Activated CD4-positive, alpha-beta T cell treated with anti-CD3 and anti-CD28 coated beads, Interleukin-2, amount 10 ng/mL, durations not matched to agents 7 days and 5 days (primary cell): ENCODE measurements at regions of chr5 and their contacts with region 1.

Region 1: GRCh38 chr5:52757991-52758390 is 29.7 kb upstream of the ITGA1 start:
- DNase-seq: no peak
- H3K4me3 Mint-ChIP-seq: no peak overlapping the region
- H3K27ac Mint-ChIP-seq: no peak overlapping the region
- H3K4me1 Mint-ChIP-seq: no peaks in the 10 kb centered on the region
- H3K27me3 Mint-ChIP-seq: peaks cover 14% of the 10 kb centered on the region

Region 2: DNA sequence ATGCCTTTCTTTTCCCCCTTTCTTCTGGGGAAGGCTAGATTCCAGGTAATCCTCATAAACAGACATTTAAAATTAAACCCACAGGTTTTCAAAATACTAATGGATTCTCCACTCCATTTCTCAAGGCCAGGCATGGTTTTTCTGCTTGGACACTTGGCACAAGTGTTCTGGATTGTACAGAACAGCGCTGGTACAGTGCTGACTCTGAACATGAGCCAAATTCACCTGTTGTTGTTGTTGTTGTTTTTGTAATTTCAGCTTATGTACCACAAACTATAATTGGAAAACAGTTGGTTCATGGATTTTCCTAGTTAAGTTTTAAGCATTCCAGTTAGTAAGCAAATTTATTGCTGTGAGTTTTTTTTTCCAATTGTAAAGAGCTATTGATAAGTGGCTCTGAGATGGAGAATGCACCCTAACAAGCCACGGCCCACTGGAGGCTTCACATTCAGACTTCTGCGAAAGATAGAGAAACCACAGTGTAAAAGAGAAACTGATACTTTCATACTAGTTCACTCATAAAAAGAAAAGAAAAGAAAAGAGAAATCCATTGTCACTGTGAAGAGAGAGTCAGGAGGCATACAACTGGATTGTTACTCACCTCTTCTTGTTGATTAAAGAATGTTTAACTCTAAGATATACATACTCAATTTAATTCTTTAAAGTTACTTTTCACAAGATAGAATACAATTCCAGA is 13.5 kb after region 1 on chr5:
- CTCF ChIA-PET with region 1: interaction called, 11 read pairs
- POLR2A ChIA-PET with region 1: no interaction called
- DNase-seq: peak; percentile 62
- H3K4me3 Mint-ChIP-seq: peak overlapping the region; percentile 12
- H3K27ac Mint-ChIP-seq: peak overlapping the region; percentile 84
- H3K4me1 Mint-ChIP-seq: peaks cover 72% of the 10 kb centered on the region
- H3K27me3 Mint-ChIP-seq: peaks cover 7% of the 10 kb centered on the region